Left cardiac atrium (tissue), 4 donors: ENCODE measurements at regions of chr10 and their contacts with region 1.

Region 1: DNA sequence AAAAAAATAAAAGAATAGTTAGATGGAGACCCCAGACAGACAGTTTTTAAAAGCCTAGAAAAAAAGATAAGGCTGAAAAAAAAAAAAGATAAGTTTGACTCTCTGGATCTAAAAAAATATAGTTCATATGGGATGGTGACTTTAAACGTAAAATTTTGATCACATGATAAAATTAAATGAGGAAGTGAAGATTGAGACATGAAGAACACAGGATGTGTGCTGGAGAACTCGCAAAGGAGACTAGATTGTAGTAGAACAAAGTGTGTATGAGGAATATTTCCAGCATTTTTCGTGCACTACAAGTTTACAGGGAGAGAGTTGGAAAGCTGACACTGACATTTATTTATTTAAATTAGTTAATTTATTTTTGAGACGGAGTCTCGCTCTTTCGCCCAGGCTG is 286.4 kb downstream of the PRPF18 start:
- DNase-seq: no peak
- ATAC-seq: no peak

Region 2: DNA sequence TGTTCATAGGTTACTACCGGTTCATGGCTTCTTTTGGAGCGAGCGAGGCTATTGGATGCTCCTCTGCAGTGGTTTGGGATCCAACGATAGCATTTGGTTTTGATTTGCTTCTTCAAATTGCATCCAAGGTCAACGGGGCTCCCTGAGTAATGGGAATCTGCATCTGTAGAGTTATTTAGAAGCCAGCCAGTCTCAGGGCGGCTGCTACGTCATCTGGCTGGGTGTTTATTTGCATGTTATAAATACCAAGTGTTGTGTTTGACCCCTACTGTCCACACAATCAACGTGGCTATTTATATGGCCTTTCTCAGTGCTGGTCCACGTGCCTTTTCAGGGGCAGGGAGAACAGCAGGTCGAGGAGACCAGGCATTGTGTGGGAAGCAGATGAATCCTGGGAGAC is 148.7 kb before region 1 on chr10:
- intact Hi-C with region 1: no loop called
- DNase-seq: no peak
- ATAC-seq: peak; percentile 76 to 81

Region 3: GRCh38 chr10:13839430-13839990 is 33.7 kb before region 1 on chr10:
- intact Hi-C with region 1: loop called in 1 of 2 experiments (anchors 5 kb)
- DNase-seq: peak; percentile 55
- ATAC-seq: peak in 1 of 2 donors; percentile 84